ENCODE measurements at regions of chr20 and their contacts with region 1.

Region 1: DNA sequence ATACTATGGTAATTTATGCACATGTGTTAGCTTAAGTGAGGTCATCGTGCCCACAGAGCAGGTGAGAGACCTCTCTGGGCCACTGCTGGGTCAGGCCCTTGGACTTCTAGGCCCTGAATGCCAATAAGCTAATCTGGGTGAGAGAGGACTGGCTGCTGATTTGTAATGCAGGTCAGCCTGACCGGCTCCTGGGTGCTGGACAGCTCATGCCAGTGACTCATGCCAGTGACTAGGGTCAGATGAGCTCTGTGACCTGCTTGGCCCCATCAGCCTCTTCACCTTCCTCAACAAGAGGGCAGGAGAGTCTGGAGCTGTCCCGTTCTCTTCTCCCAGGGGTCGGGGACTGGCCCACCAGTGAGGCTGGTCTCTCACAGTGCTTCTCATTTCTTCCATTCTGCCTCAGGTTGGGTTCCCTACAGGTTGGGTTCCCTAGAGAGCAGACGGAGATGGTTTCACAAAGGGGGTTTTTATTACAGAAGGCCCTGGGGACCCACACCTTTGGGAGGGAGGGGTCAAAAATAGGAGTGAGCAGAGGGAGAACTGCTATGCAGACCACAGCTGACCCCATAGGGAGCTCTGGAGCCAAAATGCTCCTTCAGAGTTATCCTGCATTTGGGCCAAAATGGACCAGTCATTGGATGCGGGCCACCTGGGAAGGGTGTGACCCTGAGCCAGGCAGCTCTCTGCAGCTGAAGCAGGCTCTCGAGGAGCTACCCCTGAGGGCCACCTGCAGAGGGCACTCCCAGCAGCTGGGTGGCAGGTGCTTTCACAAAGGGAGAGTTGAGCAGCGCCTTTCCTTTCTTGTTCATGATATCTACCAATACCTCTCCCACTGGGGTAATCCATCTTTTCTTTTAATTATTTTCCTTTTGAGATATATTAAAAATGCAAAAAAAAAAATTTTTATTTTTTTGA is 2.2 kb upstream of the OXT start:
- DNase-seq: peak in 2 of 3 donors; percentile 56 to 59
- H3K4me3 ChIP-seq: no peak overlapping the region
- H3K27ac ChIP-seq: no peak overlapping the region
- H3K4me1 ChIP-seq: peaks cover 0 to 36% (median 23%) of the 10 kb centered on the region in 4 experiments
- H3K27me3 ChIP-seq: no peaks in the 10 kb centered on the region

Region 2: GRCh38 chr20:3051385-3052019 is 17.7 kb before region 1 on chr20:
- CTCF ChIA-PET with region 1: interaction called, 21 read pairs
- POLR2A ChIA-PET with region 1: no interaction called
- DNase-seq: peak in 2 of 3 donors; percentile 56 to 65
- H3K4me3 ChIP-seq: no peak overlapping the region
- H3K27ac ChIP-seq: no peak overlapping the region
- H3K4me1 ChIP-seq: peaks cover 0 to 15% (median 10%) of the 10 kb centered on the region in 4 experiments
- H3K27me3 ChIP-seq: no peaks in the 10 kb centered on the region

Region 3: GRCh38 chr20:3092611-3093379 is 23.6 kb after region 1 on chr20:
- CTCF ChIA-PET with region 1: interaction called, 10 read pairs
- POLR2A ChIA-PET with region 1: interaction called, 13 read pairs
- DNase-seq: peak in 2 of 3 donors; percentile 66 to 78
- H3K4me3 ChIP-seq: peak overlapping the region in 6 of 7 experiments; percentile 12 to 70 (median 57)
- H3K27ac ChIP-seq: peak overlapping the region; percentile 77 to 79
- H3K4me1 ChIP-seq: peaks cover 10 to 65% (median 60%) of the 10 kb centered on the region in 4 experiments
- H3K27me3 ChIP-seq: no peaks in the 10 kb centered on the region